ENCODE measurements at regions of chr5 and their contacts with region 1.

Region 1: DNA sequence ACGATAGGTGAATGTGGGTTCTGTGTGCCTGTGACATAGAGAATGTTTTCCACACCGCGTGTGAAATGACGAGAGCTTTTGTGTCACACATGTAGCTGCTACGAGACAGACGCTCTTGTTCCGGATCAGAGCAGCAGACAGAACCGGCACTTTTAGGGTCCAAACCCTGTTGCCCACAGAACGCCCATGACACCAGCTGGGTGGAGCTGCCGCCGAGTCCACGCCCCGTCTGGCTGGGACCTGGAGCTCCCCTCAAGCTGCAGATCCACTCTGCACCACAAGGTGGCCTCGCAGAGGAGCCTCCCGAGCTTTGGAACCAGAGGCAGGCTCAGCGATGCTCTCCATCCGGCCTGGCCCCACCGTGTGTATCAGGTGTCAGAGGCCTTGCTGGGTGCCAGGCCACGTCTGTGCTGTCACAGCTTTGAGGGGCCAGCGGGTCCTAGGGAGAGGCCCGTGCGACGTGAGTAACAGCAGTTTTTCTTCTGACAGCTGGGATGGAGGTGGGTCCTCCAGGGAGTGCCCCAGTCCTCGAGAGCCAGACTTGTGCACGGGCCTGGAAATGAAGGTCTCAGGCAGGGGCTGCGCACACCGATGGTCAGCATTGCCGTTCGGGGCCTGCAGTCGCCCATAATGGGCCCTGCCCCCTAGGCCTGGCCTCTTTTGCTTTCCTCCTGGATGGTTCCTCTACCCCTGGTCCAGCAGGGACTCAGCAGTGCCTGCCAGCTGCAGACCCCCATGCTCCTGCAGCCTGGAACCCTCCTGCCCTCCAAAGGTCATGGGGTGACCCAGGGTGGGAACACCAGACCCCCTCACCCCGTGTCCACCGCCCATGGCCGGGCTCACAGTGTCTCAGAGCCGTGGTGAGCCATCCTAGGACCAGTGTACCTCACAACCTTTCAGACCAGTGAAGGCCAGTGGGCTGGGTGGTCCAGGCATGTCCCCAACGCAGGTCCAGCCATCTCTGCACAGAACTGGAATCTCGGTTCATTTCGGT is 2.5 kb upstream of the LRRC14B start:
- DNase-seq: peak; percentile 95
- ATAC-seq: peak; percentile 96
- H3K4me3 Mint-ChIP-seq: no peak overlapping the region
- H3K27ac Mint-ChIP-seq: no peak overlapping the region
- H3K4me1 Mint-ChIP-seq: peaks cover 14% of the 10 kb centered on the region
- H3K27me3 Mint-ChIP-seq: peaks cover 3% of the 10 kb centered on the region

Region 2: DNA sequence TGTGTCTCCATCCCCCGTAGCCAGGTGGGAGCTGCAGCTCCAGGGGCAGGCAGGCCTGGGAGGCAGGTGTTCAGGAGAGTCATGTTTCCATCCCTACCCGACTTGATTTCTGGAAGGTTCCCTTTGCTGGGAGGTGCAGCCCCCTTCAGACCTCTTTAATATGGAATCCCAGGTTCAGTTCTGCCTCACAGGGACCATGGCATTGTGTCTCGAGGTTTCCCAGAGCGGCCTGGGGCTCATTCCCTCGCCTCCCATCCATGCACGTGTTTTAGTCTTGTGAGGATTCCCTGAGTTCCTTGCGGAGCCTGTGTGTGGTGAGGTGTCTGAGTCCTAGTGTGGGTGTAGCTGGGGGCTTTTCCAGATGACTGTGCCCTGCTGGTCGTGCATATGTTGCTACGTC is 116.3 kb after region 1 on chr5:
- CTCF ChIA-PET with region 1: no interaction called
- POLR2A ChIA-PET with region 1: no interaction called
- intact Hi-C with region 1: no loop called
- DNase-seq: no peak
- ATAC-seq: no peak
- H3K4me3 Mint-ChIP-seq: no peak overlapping the region
- H3K27ac Mint-ChIP-seq: no peak overlapping the region
- H3K4me1 Mint-ChIP-seq: peaks cover 18% of the 10 kb centered on the region
- H3K27me3 Mint-ChIP-seq: no peaks in the 10 kb centered on the region

Region 3: DNA sequence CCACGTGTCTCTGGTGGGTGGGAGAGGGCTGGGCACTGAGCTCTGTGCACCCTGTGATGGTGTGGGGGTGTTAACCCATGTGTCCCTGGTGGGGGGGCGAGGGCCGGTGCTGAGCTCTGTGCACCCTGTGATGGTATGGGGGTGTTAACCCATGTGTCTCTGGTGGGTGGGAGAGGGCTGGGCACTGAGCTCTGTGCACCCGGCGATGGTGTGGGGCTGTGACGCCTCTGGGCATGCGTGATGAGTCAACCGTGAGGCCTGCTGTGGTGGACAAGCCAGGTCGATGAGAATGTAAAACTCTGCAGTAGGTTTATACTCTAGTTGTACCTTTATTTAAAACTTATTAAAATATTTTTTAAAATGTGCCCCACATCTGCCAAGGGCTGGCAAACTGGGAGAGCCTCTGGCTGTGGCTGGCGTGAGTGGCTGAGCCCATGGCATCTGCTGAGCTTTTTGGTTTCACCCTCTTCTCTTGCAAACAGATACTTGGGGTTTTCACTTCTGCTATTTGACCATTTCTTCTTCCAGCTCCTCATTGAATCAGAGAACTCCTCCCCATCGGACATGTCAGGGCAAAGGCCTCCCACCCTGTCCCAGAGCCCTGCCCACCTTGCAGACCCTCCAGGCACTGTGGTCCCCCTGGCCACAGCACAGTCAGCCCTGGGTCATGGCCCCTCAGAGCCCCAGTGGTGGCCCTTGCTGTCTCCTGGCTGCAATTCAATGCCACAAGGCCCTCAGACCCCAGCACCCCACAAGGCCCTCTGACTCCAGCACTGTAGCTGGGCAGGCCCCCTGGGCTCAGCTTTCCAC is 235.7 kb after region 1 on chr5:
- CTCF ChIA-PET with region 1: interaction called, 15 read pairs
- POLR2A ChIA-PET with region 1: no interaction called
- intact Hi-C with region 1: loop called in 1 of 2 experiments (anchors 1 kb)
- DNase-seq: no peak
- ATAC-seq: no peak
- H3K4me3 Mint-ChIP-seq: no peak overlapping the region
- H3K27ac Mint-ChIP-seq: no peak overlapping the region
- H3K4me1 Mint-ChIP-seq: no peaks in the 10 kb centered on the region
- H3K27me3 Mint-ChIP-seq: peaks cover 6% of the 10 kb centered on the region